ENCODE measurements at regions of chr15 and their contacts with region 1.

Region 1: GRCh38 chr15:80660122-80660521 is 35.0 kb upstream of the ABHD17C start:
- H3K4me3 ChIP-seq: no peak overlapping the region
- H3K27ac ChIP-seq: no peak overlapping the region
- H3K4me1 ChIP-seq: no peaks in the 10 kb centered on the region
- CTCF ChIP-seq: 0 out of 2 replicates have a peak, but pooled peaks have one; percentile 18

Region 2: GRCh38 chr15:80636675-80637074 is 23.4 kb before region 1 on chr15:
- CTCF ChIA-PET with region 1: no interaction called
- POLR2A ChIA-PET with region 1: no interaction called
- H3K4me3 ChIP-seq: no peak overlapping the region
- H3K27ac ChIP-seq: no peak overlapping the region
- H3K4me1 ChIP-seq: peaks cover 3% of the 10 kb centered on the region; the same call in 1 of the 2 replicates
- CTCF ChIP-seq: no peak

Region 3: GRCh38 chr15:80679167-80680131 is 19.3 kb after region 1 on chr15:
- CTCF ChIA-PET with region 1: interaction called, 10 read pairs
- POLR2A ChIA-PET with region 1: no interaction called
- H3K4me3 ChIP-seq: no peak overlapping the region
- H3K27ac ChIP-seq: no peak overlapping the region
- H3K4me1 ChIP-seq: no peaks in the 10 kb centered on the region
- CTCF ChIP-seq: no peak

Region 4: GRCh38 chr15:81747482-81747881 is 1087.4 kb after region 1 on chr15:
- CTCF ChIA-PET with region 1: no interaction called
- POLR2A ChIA-PET with region 1: no interaction called
- H3K4me3 ChIP-seq: no peak overlapping the region
- H3K27ac ChIP-seq: no peak overlapping the region
- H3K4me1 ChIP-seq: peaks cover 6% of the 10 kb centered on the region
- CTCF ChIP-seq: no peak